Activated naive CD8-positive, alpha-beta T cell treated with anti-CD3 and anti-CD28 coated beads, Interleukin-2, amount 10 ng/mL, durations not matched to agents 7 days and 5 days (primary cell): ENCODE measurements at regions of chr19 and their contacts with region 1.

Region 1: DNA sequence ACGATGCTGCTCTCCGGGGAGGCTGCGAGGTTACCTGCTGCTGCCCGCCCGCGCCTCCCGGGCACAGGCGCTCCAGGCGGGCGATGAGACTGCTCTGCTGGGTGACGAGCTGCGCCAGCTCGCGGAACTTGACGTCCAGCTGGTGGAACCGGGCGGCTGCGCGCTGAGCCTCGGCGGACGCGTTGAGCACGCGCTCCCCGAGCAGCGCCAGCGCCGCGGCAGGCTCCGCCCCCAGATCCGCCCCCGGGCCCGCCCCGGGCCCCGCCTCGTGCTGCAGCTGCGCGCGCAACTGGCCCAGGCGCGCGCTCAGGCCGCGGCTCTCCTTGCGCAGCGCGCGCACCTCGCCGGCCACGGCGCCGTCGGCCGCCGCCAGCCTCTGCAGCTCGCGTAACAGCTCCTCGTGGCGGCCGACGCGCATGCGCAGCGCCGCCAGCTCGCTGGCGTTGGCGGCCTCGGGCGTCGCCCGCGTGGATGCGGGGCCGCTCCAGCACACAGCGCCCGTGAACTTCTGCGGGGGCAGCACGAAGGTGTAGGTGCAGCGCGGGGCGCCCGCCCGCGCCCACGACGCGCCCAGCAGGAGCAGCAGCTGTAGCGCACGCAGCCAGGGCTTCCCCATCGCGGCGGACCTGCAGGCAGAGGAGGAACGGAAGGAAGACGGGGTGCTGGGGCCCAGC is 6.4 kb downstream of the ANGPTL6 start:
- DNase-seq: peak; percentile 99
- ATAC-seq: peak; percentile 93
- H3K4me3 Mint-ChIP-seq: peak overlapping the region; percentile 53
- H3K27ac Mint-ChIP-seq: peak overlapping the region; percentile 77
- H3K4me1 Mint-ChIP-seq: peaks cover 22% of the 10 kb centered on the region
- H3K27me3 Mint-ChIP-seq: no peaks in the 10 kb centered on the region

Region 2: DNA sequence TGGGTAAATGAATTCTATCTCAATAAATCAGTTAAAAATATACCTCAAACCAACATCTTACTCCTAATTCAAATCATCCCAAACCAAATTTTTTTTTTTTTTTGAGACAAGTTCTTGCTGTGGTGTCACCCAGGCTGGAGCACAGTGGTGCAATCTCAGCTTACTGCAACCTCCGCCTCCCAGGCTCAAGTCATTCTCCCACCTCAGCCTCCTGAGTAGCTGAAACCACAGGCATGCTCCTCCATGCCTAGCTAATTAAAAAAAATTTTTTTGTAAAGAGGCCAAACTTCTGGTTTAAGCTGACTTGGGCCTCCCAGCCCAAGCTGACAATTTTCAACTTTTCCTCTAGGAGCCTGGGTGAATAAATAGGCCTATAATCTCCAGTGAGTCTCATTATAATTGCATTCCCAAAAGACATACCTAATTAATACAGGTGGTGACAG is 137.7 kb before region 1 on chr19:
- POLR2A ChIA-PET with region 1: no interaction called
- DNase-seq: no peak
- ATAC-seq: no peak
- H3K4me3 Mint-ChIP-seq: no peak overlapping the region
- H3K27ac Mint-ChIP-seq: no peak overlapping the region
- H3K4me1 Mint-ChIP-seq: no peaks in the 10 kb centered on the region
- H3K27me3 Mint-ChIP-seq: peaks cover 13% of the 10 kb centered on the region

Region 3: GRCh38 chr19:10106100-10106936 is 10.2 kb after region 1 on chr19 and contains the start of gene PPAN:
- POLR2A ChIA-PET with region 1: interaction called, 112 read pairs
- DNase-seq: peak; percentile 94
- ATAC-seq: peak; percentile 72
- H3K4me3 Mint-ChIP-seq: peak within 1 kb of the TSS; percentile 85
- H3K27ac Mint-ChIP-seq: peak within 1 kb of the TSS; percentile 100
- H3K4me1 Mint-ChIP-seq: peaks cover 50% of the 10 kb centered on the region
- H3K27me3 Mint-ChIP-seq: no peaks in the 10 kb centered on the region
- total RNA-seq, gene PPAN: 104 to 112 TPM

Region 4: GRCh38 chr19:10112895-10113591 is 17.0 kb after region 1 on chr19:
- POLR2A ChIA-PET with region 1: interaction called, 112 read pairs
- DNase-seq: peak; percentile 82
- ATAC-seq: peak; percentile 43
- H3K4me3 Mint-ChIP-seq: peak overlapping the region; percentile 88
- H3K27ac Mint-ChIP-seq: peak overlapping the region; percentile 93
- H3K4me1 Mint-ChIP-seq: peaks cover 28% of the 10 kb centered on the region
- H3K27me3 Mint-ChIP-seq: no peaks in the 10 kb centered on the region